Naive thymus-derived CD4-positive, alpha-beta T cell (primary cell): ENCODE measurements at regions of chr16 and their contacts with region 1.

Region 1: DNA sequence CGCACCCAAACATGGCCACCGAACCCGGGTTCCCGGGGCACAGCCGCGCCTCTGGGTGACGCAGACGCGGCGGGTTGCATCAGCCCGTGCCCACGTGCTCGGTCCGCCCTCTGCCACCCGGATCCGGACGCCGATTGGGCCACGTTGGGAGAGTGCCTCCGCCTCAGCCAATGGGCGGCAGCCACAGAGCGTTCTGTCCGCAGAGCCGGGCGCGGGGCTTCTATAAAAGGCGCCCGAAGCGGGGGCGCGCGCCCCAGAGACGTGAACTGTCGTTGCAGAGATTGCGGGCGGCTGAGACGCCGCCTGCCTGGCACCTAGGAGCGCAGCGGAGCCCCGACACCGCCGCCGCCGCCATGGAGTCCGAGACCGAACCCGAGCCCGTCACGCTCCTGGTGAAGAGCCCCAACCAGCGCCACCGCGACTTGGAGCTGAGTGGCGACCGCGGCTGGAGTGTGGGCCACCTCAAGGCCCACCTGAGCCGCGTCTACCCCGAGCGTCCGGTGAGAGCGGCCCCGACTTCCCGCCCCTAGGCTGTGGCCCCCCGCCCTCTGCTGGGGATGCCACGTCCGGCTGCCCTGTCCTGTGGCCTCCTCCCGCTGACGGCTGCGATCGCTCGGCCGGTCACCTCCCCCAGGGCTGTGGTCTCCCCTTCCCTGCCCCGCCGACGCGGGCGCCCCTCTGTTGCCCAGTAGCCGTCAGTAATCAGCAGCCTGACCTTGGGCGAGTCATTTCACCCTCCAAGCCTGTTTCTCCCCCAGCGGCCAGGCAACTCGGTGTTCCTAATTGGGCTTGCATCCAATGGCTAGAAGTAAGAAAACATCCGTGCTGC is at the start of gene HERPUD1:
- DNase-seq: peak; percentile 96 to 99 (median 99)
- ATAC-seq: peak; percentile 96
- H3K4me3 ChIP-seq: peak within 1 kb of the TSS; percentile 94
- H3K4me3 Mint-ChIP-seq: peak within 1 kb of the TSS; percentile 97 to 99 (median 98)
- H3K27ac ChIP-seq: peak within 1 kb of the TSS; percentile 98
- H3K27ac Mint-ChIP-seq: peak within 1 kb of the TSS; percentile 96 to 99 (median 97)
- H3K4me1 ChIP-seq: peaks cover 13 to 18% of the 10 kb centered on the region in 2 donors
- H3K4me1 Mint-ChIP-seq: peaks cover 18 to 52% (median 38%) of the 10 kb centered on the region in 7 donors
- H3K27me3 ChIP-seq: no peaks in the 10 kb centered on the region
- H3K27me3 Mint-ChIP-seq: no peaks in the 10 kb centered on the region
- total RNA-seq, gene HERPUD1: 102 to 226 (median 131) TPM

Region 2: GRCh38 chr16:56608043-56608875 is 323.8 kb before region 1 on chr16 and contains the start of gene MT2A:
- CTCF ChIA-PET with region 1: no interaction called
- POLR2A ChIA-PET with region 1: no interaction called
- intact Hi-C with region 1: loop called in 1 of 2 experiments (anchors 5 kb)
- DNase-seq: peak; percentile 70 to 89 (median 84)
- ATAC-seq: peak; percentile 88
- H3K4me3 ChIP-seq: peak within 1 kb of the TSS; percentile 97
- H3K4me3 Mint-ChIP-seq: peak within 1 kb of the TSS; percentile 85 to 100 (median 96)
- H3K27ac ChIP-seq: peak within 1 kb of the TSS; percentile 94
- H3K27ac Mint-ChIP-seq: peak within 1 kb of the TSS; percentile 85 to 99 (median 93)
- H3K4me1 ChIP-seq: peaks cover 29 to 34% of the 10 kb centered on the region in 2 donors
- H3K4me1 Mint-ChIP-seq: peaks cover 35 to 52% (median 47%) of the 10 kb centered on the region in 7 donors
- H3K27me3 ChIP-seq: no peaks in the 10 kb centered on the region
- H3K27me3 Mint-ChIP-seq: no peaks in the 10 kb centered on the region
- total RNA-seq, gene MT2A: 15.0 to 435 (median 32.8) TPM

Region 3: GRCh38 chr16:56789360-56789759 is 142.7 kb before region 1 on chr16:
- CTCF ChIA-PET with region 1: no interaction called
- POLR2A ChIA-PET with region 1: interaction called, 3 read pairs
- intact Hi-C with region 1: loop called in 1 of 2 experiments (anchors 5 kb)
- DNase-seq: peak in 3 of 9 donors; percentile 14 to 33 (median 14)
- ATAC-seq: peak; percentile 50
- H3K4me3 ChIP-seq: no peak overlapping the region
- H3K4me3 Mint-ChIP-seq: no peak overlapping the region
- H3K27ac ChIP-seq: no peak overlapping the region
- H3K27ac Mint-ChIP-seq: no peak overlapping the region
- H3K4me1 ChIP-seq: no peaks in the 10 kb centered on the region
- H3K4me1 Mint-ChIP-seq: peaks cover 0 to 10% (median 0%) of the 10 kb centered on the region in 7 donors
- H3K27me3 ChIP-seq: no peaks in the 10 kb centered on the region
- H3K27me3 Mint-ChIP-seq: no peaks in the 10 kb centered on the region

Region 4: GRCh38 chr16:56944954-56945839 is 13.1 kb after region 1 on chr16:
- CTCF ChIA-PET with region 1: interaction called, 5 read pairs
- POLR2A ChIA-PET with region 1: interaction called, 32 read pairs
- intact Hi-C with region 1: loop called in 1 of 2 experiments (anchors 1 kb)
- DNase-seq: no peak
- ATAC-seq: no peak
- H3K4me3 ChIP-seq: no peak overlapping the region
- H3K4me3 Mint-ChIP-seq: no peak overlapping the region
- H3K27ac ChIP-seq: no peak overlapping the region
- H3K27ac Mint-ChIP-seq: peak overlapping the region in 6 of 9 donors; percentile 11 to 81 (median 27)
- H3K4me1 ChIP-seq: peaks cover 0 to under 1% of the 10 kb centered on the region in 2 donors
- H3K4me1 Mint-ChIP-seq: peaks cover 0 to 38% (median 1%) of the 10 kb centered on the region in 7 donors
- H3K27me3 ChIP-seq: no peaks in the 10 kb centered on the region
- H3K27me3 Mint-ChIP-seq: no peaks in the 10 kb centered on the region

Region 5: DNA sequence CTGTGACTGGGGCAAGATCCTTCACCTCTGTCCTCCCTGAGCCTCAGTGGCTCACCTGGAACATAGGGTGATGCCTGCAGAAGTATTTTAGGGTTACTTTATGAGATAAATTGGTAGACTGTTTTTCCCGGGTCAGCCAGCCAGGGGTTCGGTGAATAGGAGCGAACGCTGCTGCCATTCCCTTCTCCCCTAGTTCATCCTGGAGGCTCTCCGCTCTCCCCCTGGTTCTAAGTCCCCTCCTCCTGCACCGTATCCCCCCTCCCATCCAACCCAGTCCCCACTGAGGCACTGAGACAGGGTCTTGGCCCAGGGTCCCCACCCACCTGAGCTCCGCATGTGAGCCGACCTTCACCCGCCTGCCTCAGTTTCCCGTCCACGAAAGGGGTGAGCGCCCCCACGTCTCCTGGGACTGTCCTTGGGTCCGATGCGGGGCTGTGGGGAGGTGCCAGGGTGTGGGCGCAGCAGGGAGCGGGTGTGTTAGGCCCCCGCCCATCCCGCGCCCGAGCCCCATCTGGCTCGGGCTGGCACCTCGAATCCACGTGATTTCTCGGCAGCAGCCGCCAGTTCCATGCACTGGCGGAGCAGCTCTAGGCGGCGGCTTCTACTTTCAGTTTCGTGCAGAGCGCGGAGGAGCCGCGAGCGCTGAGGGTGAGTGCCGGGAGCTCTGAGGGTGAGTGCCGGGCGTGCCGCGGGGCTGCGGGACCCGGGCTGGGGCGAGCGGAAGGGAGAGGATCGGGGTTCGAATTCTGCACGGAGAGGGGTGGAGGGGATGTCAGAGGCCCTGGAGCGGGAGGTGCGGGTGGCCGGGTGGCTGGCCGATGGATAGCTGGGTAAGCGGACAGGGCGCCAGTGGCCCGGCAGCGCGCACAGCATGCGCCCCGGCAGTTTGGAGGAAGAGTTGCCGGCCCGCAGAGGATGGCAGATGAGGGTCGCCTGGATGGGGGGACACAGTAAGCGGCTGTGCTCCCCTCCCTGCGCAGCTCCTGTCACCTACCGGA is 57.1 kb after region 1 on chr16 and contains the start of gene NLRC5:
- CTCF ChIA-PET with region 1: no interaction called
- POLR2A ChIA-PET with region 1: interaction called, 7 read pairs
- intact Hi-C with region 1: loop called (anchors 1 to 5 kb)
- DNase-seq: peak; percentile 72 to 93 (median 88)
- ATAC-seq: peak; percentile 95
- H3K4me3 ChIP-seq: peak within 1 kb of the TSS; percentile 73
- H3K4me3 Mint-ChIP-seq: peak within 1 kb of the TSS; percentile 93 to 100 (median 98)
- H3K27ac ChIP-seq: peak within 1 kb of the TSS; percentile 98
- H3K27ac Mint-ChIP-seq: peak within 1 kb of the TSS; percentile 85 to 99 (median 97)
- H3K4me1 ChIP-seq: peaks cover 24 to 51% of the 10 kb centered on the region in 2 donors
- H3K4me1 Mint-ChIP-seq: peaks cover 65 to 87% (median 73%) of the 10 kb centered on the region in 7 donors
- H3K27me3 ChIP-seq: no peaks in the 10 kb centered on the region
- H3K27me3 Mint-ChIP-seq: no peaks in the 10 kb centered on the region
- total RNA-seq, gene NLRC5: 380 to 615 (median 394) TPM

Region 6: DNA sequence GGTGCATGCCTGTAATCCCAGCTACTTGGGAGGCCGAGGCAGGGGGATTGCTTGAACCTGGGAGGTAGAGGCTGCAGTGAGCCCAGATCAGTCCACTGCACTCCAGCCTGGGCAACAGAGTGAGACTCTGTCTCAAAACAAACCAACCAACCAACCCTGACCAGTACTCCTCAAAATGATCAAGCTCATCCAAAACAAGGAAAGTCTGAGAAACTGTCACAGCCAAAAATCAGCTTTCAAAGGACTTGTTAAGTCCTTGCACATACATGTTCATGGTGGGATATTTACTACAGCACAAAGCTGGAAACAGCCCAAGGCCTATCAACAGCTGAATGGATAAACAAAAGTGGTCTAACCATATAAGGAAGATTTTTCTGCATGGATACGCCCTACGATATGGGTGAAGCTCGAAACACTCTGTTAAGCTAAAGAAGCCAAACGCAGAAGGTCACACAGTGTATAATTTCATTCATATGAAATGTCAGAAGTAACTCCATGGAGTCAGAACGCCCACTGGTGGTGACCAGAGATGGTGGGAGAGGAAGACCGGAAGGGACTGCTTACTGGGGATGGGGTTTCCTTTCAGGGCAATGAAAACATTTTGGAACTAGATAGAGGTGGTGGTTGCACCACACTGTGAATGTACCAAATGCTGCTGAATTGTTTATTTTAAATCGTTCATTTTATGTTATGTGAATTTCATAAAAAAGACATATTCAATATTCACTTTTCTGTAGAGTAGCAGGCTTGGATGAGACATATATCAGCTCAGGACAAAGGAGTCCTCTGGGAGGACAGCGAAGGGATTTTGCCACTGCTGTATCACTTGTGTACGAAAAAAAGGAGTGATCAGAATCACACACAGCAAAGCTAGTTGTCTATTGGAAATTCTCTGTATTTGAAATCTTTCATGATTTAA is 490.2 kb after region 1 on chr16:
- CTCF ChIA-PET with region 1: no interaction called
- POLR2A ChIA-PET with region 1: no interaction called
- intact Hi-C with region 1: no loop called
- DNase-seq: no peak
- ATAC-seq: no peak
- H3K4me3 ChIP-seq: no peak overlapping the region
- H3K4me3 Mint-ChIP-seq: no peak overlapping the region
- H3K27ac ChIP-seq: no peak overlapping the region
- H3K27ac Mint-ChIP-seq: peak overlapping the region in 1 of 9 donors; percentile 48
- H3K4me1 ChIP-seq: peaks cover 9 to 10% of the 10 kb centered on the region in 2 donors
- H3K4me1 Mint-ChIP-seq: peaks cover 11 to 29% (median 24%) of the 10 kb centered on the region in 7 donors
- H3K27me3 ChIP-seq: no peaks in the 10 kb centered on the region
- H3K27me3 Mint-ChIP-seq: no peaks in the 10 kb centered on the region

Region 7: DNA sequence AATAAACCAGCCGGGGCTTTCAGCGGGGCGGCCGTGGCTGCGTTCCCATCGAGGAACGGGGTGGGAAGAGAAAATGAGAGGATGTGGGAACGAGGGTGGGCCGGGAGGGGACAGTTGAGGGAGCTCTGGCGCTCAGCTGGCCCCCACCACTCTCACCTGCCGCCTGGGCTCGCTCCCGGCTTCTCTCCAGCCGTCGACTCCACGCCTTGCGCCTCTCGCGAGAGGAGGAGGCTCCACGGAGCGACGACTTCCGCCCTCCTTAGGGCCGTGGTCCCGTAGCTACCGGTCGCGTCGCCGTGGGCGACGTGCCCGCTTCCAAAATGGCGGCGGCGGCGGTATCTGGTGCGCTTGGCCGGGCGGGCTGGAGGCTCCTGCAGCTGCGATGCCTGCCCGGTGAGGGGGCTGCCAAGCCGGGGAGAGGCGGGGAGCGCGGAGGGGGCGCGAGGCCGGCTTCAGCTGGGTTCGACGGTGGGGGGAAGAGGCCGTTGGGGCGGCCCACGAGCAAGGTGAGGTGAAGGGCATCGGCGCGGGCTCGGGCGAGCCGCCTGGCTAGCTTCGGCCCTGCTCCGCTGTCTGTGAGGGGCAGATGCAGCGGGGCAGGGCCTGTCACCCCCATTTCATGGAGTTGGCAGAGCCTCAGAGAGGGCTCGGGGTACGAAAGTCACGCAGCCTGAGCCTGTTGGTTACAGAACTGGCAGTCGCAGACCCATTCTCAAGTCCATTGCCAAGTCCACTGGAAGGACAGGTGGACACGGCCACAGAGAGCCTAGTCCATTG is 515.3 kb after region 1 on chr16 and contains the starts of genes CIAPIN1 and COQ9:
- CTCF ChIA-PET with region 1: no interaction called
- POLR2A ChIA-PET with region 1: no interaction called
- intact Hi-C with region 1: loop called in 1 of 2 experiments (anchors 10 kb)
- DNase-seq: peak; percentile 83 to 94 (median 88)
- ATAC-seq: peak; percentile 99
- H3K4me3 ChIP-seq: peak within 1 kb of the TSS; percentile 84
- H3K4me3 Mint-ChIP-seq: peak within 1 kb of the TSS; percentile 90 to 97 (median 92)
- H3K27ac ChIP-seq: peak within 1 kb of the TSS; percentile 87
- H3K27ac Mint-ChIP-seq: peak within 1 kb of the TSS; percentile 75 to 96 (median 90)
- H3K4me1 ChIP-seq: peaks cover 7 to 17% of the 10 kb centered on the region in 2 donors
- H3K4me1 Mint-ChIP-seq: peaks cover 15 to 64% (median 45%) of the 10 kb centered on the region in 7 donors
- H3K27me3 ChIP-seq: no peaks in the 10 kb centered on the region
- H3K27me3 Mint-ChIP-seq: no peaks in the 10 kb centered on the region
- total RNA-seq, gene CIAPIN1: 33.6 to 52.8 (median 35.8) TPM
- total RNA-seq, gene COQ9: 16.4 to 45.4 (median 36.6) TPM